ENCODE measurements at regions of chr4 and their contacts with region 1.

Region 1: DNA sequence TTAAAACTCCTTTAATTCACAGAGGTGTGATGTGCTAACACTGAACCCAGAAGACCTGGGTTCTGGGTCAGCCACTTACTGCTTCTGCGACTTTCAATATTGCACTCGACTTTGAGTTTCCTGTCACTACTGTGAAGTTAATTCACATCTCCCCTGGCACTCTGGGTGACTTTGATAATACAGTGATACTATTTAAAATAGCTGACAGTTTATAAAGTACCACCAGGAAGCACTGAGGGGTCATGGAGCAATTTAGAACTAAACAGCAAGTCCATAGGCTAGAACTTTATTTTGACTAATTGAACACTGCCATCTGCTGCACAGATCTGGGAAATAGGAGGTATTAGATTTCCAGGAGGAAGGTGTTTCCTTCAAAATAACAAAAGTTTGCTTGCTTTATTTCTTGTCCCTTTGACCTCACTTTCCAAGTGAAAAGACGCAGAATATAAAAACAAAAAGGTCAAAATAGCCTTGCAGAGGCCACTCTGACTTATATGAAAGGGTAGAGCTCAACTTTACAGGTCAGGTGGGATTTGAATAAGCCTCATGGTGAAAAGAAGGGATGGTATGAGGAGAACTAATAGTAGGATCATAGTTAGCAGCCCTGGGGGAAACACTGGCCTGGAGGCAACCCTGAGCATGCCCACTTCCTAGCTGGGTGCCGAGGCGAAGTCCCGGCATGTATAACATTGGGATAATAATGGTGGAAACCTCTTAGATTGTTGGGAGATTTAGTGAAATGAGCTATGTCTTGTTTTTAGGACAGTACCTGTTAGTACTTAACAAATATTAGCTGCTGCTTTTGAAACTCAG is 53.4 kb downstream of the ZNF518B start:
- DNase-seq: no peak
- H3K4me3 ChIP-seq: no peak overlapping the region
- H3K27ac ChIP-seq: no peak overlapping the region
- H3K4me1 ChIP-seq: no peaks in the 10 kb centered on the region
- H3K27me3 ChIP-seq: no peaks in the 10 kb centered on the region
- CTCF ChIP-seq: peak in 3 of 4 experiments; percentile 12 to 62 (median 54)
- POLR2A ChIP-seq: no peak

Region 2: GRCh38 chr4:10164877-10165283 is 239.0 kb before region 1 on chr4:
- intact Hi-C with region 1: loop called (anchors 10 kb)
- DNase-seq: peak in 1 of 2 donors; percentile 24
- H3K4me3 ChIP-seq: no peak overlapping the region
- H3K27ac ChIP-seq: no peak overlapping the region
- H3K4me1 ChIP-seq: no peaks in the 10 kb centered on the region
- H3K27me3 ChIP-seq: no peaks in the 10 kb centered on the region
- CTCF ChIP-seq: peak; percentile 37 to 63 (median 48)
- POLR2A ChIP-seq: no peak

Region 3: DNA sequence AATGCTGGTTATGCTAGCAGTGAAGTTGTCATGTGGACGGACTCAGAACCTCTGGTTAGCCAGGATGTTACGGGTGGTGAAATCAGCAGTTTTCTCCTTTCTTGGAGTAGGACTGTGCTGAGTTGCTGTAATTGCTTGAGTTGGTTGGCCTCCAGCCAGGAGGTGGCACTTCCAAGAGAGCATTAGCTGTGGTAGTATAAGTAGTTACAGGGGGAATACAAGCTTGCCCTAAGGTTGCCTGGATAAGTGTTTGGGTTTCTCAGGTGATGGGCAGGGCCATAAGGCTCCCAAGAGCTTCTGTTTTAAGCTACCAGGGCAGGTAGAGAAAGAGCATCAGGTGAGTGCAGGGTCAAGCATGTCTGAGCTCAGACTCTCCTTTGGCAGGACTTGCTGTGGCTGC is 49.6 kb before region 1 on chr4:
- intact Hi-C with region 1: no loop called
- DNase-seq: no peak
- H3K4me3 ChIP-seq: no peak overlapping the region
- H3K27ac ChIP-seq: no peak overlapping the region
- H3K4me1 ChIP-seq: no peaks in the 10 kb centered on the region
- H3K27me3 ChIP-seq: no peaks in the 10 kb centered on the region
- CTCF ChIP-seq: no peak
- POLR2A ChIP-seq: no peak

Measured in uterus (tissue), 4 donors.